Activated CD8-positive, alpha-beta T cell treated with anti-CD3 and anti-CD28 coated beads, Interleukin-2, amount 10 ng/mL, durations not matched to agents 7 days and 5 days (primary cell): ENCODE measurements at regions of chr11 and their contacts with region 1.

Region 1: DNA sequence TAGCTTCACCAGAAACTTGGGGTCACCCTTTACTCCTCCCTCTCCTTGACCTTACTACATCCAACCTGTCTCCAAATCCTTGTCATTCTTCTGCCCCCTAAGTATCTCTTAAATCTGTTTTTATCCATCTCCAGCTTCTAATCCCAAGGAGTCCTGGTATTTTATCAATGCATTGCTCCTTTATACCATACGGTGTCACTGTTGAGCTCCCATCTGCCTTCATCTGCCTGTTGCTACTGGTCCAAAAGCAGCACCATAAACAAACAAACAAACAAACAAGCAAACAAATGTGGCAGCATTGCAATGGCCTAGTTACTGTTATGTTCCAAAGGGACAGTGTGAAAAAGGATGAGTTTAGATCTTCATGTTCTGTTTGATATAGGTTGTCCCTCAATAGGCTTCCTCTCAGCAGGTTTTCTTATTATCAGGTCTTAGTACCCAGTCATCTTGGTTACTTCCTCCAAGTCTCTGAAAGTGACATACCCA is 34.2 kb downstream of the DNHD1 start:
- DNase-seq: peak; percentile 41
- ATAC-seq: peak; percentile 69
- H3K4me3 Mint-ChIP-seq: no peak overlapping the region
- H3K27ac Mint-ChIP-seq: no peak overlapping the region
- H3K4me1 Mint-ChIP-seq: peaks cover 14% of the 10 kb centered on the region
- H3K27me3 Mint-ChIP-seq: no peaks in the 10 kb centered on the region

Region 2: DNA sequence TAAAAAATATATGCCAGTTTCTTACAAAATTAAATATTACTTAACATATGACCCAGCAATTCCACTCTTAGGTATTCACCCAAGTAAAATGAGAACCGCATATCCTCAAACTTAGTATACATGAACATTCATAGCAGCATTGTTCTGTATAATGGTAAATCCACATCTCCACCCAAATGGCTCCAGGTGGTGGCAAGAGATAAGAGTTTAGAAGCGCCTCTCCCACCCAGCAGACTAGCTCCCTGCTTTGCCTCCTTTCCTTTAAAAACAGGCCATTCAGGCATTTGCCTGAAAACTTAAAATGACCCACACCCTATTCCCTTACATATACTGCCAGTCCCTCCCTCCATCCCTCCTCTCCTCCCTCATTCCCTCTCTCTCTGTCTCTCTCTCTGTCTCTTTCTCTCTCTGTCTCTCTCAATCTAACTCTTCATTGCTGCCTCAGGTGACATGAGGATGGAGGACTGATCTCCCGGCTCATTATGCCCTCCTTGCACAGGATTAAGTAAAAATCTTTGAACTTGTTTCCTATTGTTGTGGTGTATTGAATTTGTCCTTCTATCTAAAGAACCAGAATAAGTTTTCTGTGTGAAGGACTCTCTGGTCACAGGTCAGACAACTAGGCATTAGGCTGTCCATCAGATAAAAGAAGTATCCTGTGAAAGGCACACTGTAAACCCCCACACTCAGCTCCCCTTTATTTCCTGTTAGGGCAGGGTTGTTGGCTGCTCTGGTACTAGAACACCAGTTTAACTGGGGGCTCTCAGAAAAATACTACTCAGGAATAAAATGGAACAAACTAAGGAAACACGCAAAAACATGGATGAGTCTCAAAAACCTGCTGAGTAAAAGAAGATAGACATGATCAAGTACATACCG is 23.8 kb after region 1 on chr11:
- CTCF ChIA-PET with region 1: interaction called, 10 read pairs
- POLR2A ChIA-PET with region 1: interaction called, 3 read pairs
- DNase-seq: no peak
- ATAC-seq: no peak
- H3K4me3 Mint-ChIP-seq: no peak overlapping the region
- H3K27ac Mint-ChIP-seq: no peak overlapping the region
- H3K4me1 Mint-ChIP-seq: no peaks in the 10 kb centered on the region
- H3K27me3 Mint-ChIP-seq: no peaks in the 10 kb centered on the region

Region 3: DNA sequence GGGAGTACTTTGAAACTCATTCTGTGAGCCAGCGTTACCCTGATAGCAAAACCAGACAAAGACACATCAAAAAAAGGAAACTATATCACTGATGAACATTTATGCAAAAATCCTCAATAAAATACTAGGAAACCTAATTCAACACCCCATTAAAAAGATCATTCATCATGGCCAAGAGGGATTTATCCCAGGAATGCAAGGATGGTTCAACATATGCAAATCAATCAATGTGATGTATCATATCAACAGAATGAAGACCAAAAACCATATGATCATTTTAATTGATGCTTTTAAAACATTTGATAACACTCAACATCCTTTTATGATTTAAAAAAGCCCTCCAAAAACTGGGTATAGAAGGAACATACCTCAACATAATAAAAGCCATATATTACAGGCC is 52.3 kb after region 1 on chr11:
- CTCF ChIA-PET with region 1: no interaction called
- POLR2A ChIA-PET with region 1: no interaction called
- DNase-seq: no peak
- ATAC-seq: no peak
- H3K4me3 Mint-ChIP-seq: no peak overlapping the region
- H3K27ac Mint-ChIP-seq: no peak overlapping the region
- H3K4me1 Mint-ChIP-seq: no peaks in the 10 kb centered on the region
- H3K27me3 Mint-ChIP-seq: no peaks in the 10 kb centered on the region

Region 4: GRCh38 chr11:6619004-6619745 is 87.9 kb after region 1 on chr11 and contains the start of gene TPP1:
- CTCF ChIA-PET with region 1: interaction called, 11 read pairs
- POLR2A ChIA-PET with region 1: interaction called, 4 read pairs
- DNase-seq: peak; percentile 95
- ATAC-seq: peak; percentile 96
- H3K4me3 Mint-ChIP-seq: no peak within 1 kb of the TSS
- H3K27ac Mint-ChIP-seq: no peak within 1 kb of the TSS
- H3K4me1 Mint-ChIP-seq: peaks cover 2% of the 10 kb centered on the region
- H3K27me3 Mint-ChIP-seq: no peaks in the 10 kb centered on the region
- total RNA-seq, gene TPP1: 74.1 to 78.9 TPM

Region 5: GRCh38 chr11:6705905-6706535 is 174.7 kb after region 1 on chr11:
- CTCF ChIA-PET with region 1: interaction called, 29 read pairs
- POLR2A ChIA-PET with region 1: no interaction called
- DNase-seq: peak; percentile 53
- ATAC-seq: peak; percentile 47
- H3K4me3 Mint-ChIP-seq: no peak overlapping the region
- H3K27ac Mint-ChIP-seq: peak overlapping the region; percentile 51
- H3K4me1 Mint-ChIP-seq: peaks cover 6% of the 10 kb centered on the region
- H3K27me3 Mint-ChIP-seq: no peaks in the 10 kb centered on the region

Region 6: DNA sequence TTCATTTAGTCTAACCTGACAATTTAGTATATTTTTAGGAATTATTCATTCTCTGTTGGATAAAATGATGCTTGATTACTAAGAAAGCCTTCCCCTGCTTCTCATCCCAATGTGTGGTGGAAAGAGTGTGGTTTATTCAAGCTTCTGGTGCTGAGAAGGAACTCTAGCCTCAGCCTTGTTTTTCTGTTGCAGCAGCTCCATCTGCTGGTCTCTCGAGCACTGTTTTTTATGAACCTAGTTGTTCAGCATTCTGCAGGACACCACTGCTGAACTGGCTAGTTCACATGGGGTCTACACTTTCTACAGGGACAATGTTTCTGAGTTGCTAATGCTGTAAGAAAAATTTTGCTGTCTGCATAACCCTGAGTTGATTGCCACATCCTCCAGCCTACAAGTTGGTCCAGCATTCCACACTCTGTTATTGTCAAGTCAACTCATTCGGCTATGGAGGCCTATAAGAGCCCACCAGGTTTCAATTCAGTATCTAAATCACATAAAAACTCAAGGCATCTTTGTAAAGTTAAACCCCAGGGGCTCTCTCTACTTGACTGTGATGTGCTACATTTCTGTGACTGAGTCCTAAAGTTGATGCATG is 226.2 kb after region 1 on chr11:
- CTCF ChIA-PET with region 1: interaction called, 15 read pairs
- POLR2A ChIA-PET with region 1: no interaction called
- DNase-seq: peak; percentile 76
- ATAC-seq: peak; percentile 90
- H3K4me3 Mint-ChIP-seq: no peak overlapping the region
- H3K27ac Mint-ChIP-seq: no peak overlapping the region
- H3K4me1 Mint-ChIP-seq: no peaks in the 10 kb centered on the region
- H3K27me3 Mint-ChIP-seq: peaks cover 2% of the 10 kb centered on the region